Breast epithelium (tissue), 4 donors: ENCODE measurements at regions of chr18 and their contacts with region 1.

Region 1: DNA sequence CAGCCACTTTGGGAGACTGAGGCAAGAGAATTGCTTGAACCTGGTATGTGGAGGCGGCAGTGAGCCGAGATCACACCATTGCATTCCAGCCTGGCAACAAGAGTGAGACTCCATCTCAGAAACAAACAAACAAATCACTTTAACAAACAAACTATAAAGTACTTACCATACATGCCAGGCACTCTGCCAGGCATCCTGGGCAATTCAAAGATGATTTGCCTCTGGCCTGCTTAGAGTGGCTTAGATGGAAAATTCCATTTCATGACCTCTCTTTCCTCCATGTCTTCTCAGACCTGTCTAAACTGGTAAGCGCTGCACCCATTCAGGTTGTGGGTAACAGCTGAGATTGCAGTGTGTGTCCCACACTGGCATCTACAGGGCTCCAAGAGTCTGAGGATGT is 273.2 kb downstream of the BCL2 start:
- DNase-seq: no peak
- H3K4me3 ChIP-seq: no peak overlapping the region
- H3K27ac ChIP-seq: no peak overlapping the region
- H3K4me1 ChIP-seq: no peaks in the 10 kb centered on the region
- H3K27me3 ChIP-seq: no peaks in the 10 kb centered on the region
- CTCF ChIP-seq: no peak
- POLR2A ChIP-seq: no peak

Region 2: GRCh38 chr18:62659432-62660097 is 386.8 kb before region 1 on chr18:
- intact Hi-C with region 1: no loop called
- DNase-seq: no peak
- H3K4me3 ChIP-seq: no peak overlapping the region
- H3K27ac ChIP-seq: no peak overlapping the region
- H3K4me1 ChIP-seq: no peaks in the 10 kb centered on the region
- H3K27me3 ChIP-seq: no peaks in the 10 kb centered on the region
- CTCF ChIP-seq: no peak
- POLR2A ChIP-seq: no peak

Region 3: GRCh38 chr18:63105636-63106316 is 59.4 kb after region 1 on chr18:
- intact Hi-C with region 1: loop called (anchors 5 kb)
- DNase-seq: no peak
- H3K4me3 ChIP-seq: no peak overlapping the region
- H3K27ac ChIP-seq: no peak overlapping the region
- H3K4me1 ChIP-seq: no peaks in the 10 kb centered on the region
- H3K27me3 ChIP-seq: no peaks in the 10 kb centered on the region
- CTCF ChIP-seq: no peak
- POLR2A ChIP-seq: no peak